Endothelial cell of umbilical vein (primary cell): ENCODE measurements at regions of chr7 and their contacts with region 1.

Region 1: GRCh38 chr7:156733638-156734037 is 93.1 kb downstream of the RNF32 start:
- DNase-seq: no peak
- H3K4me3 ChIP-seq: no peak overlapping the region
- H3K27ac ChIP-seq: no peak overlapping the region
- H3K4me1 ChIP-seq: no peaks in the 10 kb centered on the region
- H3K27me3 ChIP-seq: no peaks in the 10 kb centered on the region
- CTCF ChIP-seq: no peak
- POLR2A ChIP-seq: no peak

Region 2: DNA sequence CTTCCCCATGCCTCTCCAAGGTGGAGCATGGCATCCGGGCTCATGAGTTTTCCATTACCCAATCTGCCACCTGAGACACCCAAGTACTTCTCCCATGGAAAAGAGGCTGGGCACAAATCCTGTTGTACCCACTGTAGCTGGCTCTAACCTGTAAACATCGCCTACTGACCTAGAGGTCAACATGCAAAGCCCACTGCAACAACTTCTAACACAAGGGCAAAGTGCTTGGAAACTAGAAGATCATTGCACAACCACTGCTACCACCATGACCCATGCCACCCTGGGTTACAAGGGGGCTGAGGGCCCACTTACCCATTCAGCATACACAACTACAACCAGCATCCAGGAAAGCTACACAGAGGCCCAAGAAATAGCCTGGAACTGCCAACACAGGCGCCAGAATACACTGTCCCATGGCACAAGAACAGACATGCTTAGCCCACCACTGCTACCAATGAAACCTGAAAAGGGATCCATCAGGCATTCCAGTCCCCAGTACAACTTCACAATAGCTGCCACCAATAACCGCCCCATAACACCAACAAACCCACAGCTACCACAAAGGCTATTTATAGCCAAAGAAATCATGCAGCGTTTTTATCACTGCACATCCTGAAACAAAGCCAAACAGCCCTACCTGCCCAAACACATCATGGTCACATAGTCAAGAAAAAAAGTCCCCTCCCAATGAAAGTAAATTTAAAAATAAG is 29.7 kb before region 1 on chr7:
- CTCF ChIA-PET with region 1: no interaction called
- POLR2A ChIA-PET with region 1: no interaction called
- dilution Hi-C with region 1: no loop called
- intact Hi-C with region 1: no loop called
- DNase-seq: no peak
- H3K4me3 ChIP-seq: no peak overlapping the region
- H3K27ac ChIP-seq: no peak overlapping the region
- H3K4me1 ChIP-seq: no peaks in the 10 kb centered on the region
- H3K27me3 ChIP-seq: no peaks in the 10 kb centered on the region
- CTCF ChIP-seq: no peak
- POLR2A ChIP-seq: no peak

Region 3: GRCh38 chr7:156773966-156774365 is 40.3 kb after region 1 on chr7:
- CTCF ChIA-PET with region 1: no interaction called
- POLR2A ChIA-PET with region 1: no interaction called
- dilution Hi-C with region 1: no loop called
- intact Hi-C with region 1: loop called (anchors 1 kb)
- DNase-seq: no peak
- H3K4me3 ChIP-seq: no peak overlapping the region
- H3K27ac ChIP-seq: no peak overlapping the region
- H3K4me1 ChIP-seq: no peaks in the 10 kb centered on the region
- H3K27me3 ChIP-seq: no peaks in the 10 kb centered on the region
- CTCF ChIP-seq: no peak
- POLR2A ChIP-seq: no peak

Region 4: DNA sequence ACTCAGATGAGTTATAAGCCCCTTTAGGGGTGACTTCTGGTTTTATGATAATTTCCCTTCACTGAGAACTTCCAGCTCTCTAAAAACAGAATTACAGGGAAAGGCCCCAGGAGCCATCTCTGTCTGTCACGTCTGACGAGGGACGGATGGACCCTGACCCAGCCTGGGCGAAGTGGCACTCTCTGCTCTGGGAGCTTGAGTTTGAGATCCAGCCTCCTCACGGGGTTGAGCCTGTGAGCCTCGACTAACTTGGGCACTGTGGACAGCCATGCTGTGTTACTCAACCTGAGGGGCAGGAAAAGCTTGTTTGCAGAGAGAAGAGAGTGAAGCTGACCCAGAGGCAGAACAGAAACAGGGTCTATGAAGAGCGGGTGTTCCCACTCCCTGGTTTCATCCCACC is 331.4 kb after region 1 on chr7:
- CTCF ChIA-PET with region 1: no interaction called
- POLR2A ChIA-PET with region 1: no interaction called
- dilution Hi-C with region 1: no loop called
- intact Hi-C with region 1: no loop called
- DNase-seq: no peak
- H3K4me3 ChIP-seq: no peak overlapping the region
- H3K27ac ChIP-seq: no peak overlapping the region
- H3K4me1 ChIP-seq: no peaks in the 10 kb centered on the region
- H3K27me3 ChIP-seq: peaks cover 0 to 2% of the 10 kb centered on the region in 2 experiments
- CTCF ChIP-seq: no peak
- POLR2A ChIP-seq: no peak